ENCODE measurements at regions of chr19 and their contacts with region 1.

Region 1: DNA sequence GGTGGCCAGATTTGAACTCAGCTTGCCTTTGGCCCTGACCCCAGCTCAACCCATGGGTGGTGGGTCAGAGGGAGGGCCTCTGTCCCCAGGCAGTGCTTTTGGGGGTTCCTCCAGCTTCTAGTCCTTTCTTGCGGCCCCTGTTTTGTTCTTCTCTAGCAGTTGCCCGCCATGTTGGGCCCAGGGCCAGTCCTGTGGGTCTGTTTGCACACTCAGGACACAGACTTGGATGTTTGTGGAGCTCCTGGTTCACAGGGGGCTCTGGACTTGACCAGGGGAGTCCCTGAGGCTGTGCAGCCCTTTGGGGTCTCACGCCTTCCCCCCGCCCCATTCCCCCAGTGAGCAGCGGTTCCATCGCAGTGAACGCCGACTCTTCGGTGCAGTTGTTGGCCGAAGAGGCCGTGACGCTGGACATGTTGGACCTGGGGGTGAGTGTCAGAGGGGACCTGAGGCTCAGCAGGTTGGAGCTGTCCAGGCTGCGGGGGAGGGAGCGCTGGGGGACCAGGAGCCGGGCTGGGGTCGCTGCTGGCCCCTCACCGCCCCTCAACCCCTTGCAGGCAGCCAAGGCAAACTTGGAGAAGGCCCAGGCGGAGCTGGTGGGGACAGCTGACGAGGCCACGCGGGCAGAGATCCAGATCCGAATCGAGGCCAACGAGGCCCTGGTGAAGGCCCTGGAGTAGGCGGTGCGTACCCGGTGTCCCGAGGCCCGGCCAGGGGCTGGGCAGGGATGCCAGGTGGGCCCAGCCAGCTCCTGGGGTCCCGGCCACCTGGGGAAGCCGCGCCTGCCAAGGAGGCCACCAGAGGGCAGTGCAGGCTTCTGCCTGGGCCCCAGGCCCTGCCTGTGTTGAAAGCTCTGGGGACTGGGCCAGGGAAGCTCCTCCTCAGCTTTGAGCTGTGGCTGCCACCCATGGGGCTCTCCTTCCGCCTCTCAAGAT is 2.5 kb downstream of the ATP5F1D start:
- DNase-seq: peak; percentile 91 to 95 (median 95)
- ATAC-seq: peak; percentile 38 to 40
- H3K4me3 ChIP-seq: no peak overlapping the region
- H3K27ac ChIP-seq: peak overlapping the region; percentile 90
- H3K4me1 ChIP-seq: peaks cover 6% of the 10 kb centered on the region
- H3K27me3 ChIP-seq: no peaks in the 10 kb centered on the region

Region 2: DNA sequence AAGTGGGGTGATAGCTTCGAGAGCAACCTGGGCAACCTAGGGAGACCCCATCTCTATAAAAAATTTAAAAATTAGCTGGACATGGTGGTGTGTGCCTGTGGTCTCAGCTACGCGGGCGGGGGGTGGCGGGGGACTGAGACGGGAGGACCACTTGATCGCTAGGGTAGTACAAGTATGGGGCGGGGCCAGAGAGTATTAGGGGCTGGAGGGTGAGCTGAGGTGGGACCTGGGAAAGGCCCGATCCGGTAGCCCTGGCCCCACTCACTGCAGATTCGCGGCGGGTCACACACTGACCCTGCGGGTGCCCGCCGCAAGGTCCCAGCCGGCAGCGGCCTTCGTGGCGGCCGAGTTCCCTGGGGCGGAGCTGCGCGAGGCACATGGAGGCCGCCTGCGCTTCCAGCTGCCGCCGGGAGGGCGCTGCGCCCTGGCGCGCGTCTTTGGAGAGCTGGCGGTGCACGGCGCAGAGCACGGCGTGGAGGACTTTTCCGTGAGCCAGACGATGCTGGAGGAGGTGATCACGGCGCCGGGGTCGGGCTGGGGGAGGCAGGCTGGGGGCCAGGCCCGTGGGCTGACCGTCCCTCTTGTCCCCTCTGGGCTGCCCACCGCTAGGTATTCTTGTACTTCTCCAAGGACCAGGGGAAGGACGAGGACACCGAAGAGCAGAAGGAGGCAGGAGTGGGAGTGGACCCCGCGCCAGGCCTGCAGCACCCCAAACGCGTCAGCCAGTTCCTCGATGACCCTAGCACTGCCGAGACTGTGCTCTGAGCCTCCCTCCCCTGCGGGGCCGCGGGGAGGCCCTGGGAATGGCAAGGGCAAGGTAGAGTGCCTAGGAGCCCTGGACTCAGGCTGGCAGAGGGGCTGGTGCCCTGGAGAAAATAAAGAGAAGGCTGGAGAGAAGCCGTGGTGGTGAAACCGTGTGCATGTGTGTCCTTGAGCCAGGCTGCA is 179.1 kb before region 1 on chr19:
- intact Hi-C with region 1: no loop called
- DNase-seq: peak; percentile 72 to 91 (median 88)
- ATAC-seq: peak; percentile 64 to 70
- H3K4me3 ChIP-seq: no peak overlapping the region
- H3K27ac ChIP-seq: no peak overlapping the region
- H3K4me1 ChIP-seq: no peaks in the 10 kb centered on the region
- H3K27me3 ChIP-seq: no peaks in the 10 kb centered on the region

Region 3: DNA sequence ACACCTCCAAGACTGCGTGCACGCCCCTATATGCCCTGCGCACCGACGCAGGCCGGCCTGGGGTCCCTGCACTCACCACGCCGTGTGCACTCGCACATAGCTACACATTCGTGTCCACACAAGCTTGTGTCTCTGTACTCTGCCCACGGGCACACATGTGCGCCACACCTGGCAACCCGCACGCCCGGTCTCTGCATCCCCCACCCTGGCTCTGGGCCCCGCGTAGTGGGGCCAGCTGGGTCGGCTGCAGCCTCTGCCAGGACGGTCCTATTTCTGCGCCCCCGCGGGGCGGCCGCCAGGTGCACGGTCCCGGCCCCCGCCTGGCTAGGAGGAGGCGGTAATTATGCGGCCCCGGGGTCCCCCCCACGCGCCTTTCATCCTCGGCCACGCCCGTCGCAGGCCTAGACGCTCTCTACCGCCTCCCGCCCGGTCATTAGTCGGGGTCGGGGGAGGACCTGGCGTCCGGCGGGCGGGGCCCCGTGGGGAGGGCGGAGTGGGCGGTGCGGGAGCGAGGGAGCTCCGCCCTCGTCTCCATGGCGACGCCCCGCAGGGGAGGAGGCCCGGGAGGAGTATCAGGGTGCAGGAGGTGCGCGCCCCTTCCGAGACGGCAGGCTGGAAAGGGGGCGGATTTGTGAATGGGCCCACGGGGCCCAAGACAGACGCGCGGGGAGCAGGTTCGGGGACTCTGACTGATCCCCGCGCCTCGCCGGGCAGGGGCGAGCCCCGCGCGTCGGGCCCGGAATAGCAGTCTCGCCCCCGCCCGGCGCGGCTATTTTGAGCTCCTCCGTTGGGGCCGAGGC is 22.3 kb after region 1 on chr19:
- intact Hi-C with region 1: loop called in 2 of 4 experiments (anchors 2 kb)
- DNase-seq: peak; percentile 93 to 96 (median 95)
- ATAC-seq: peak; percentile 54 to 69
- H3K4me3 ChIP-seq: peak overlapping the region; percentile 24
- H3K27ac ChIP-seq: peak overlapping the region; percentile 84
- H3K4me1 ChIP-seq: peaks cover 18% of the 10 kb centered on the region
- H3K27me3 ChIP-seq: no peaks in the 10 kb centered on the region

Measured in right cardiac atrium (tissue), 5 donors.